HepG2 (cell line): ENCODE measurements at regions of chr4 and their contacts with region 1.

Region 1: DNA sequence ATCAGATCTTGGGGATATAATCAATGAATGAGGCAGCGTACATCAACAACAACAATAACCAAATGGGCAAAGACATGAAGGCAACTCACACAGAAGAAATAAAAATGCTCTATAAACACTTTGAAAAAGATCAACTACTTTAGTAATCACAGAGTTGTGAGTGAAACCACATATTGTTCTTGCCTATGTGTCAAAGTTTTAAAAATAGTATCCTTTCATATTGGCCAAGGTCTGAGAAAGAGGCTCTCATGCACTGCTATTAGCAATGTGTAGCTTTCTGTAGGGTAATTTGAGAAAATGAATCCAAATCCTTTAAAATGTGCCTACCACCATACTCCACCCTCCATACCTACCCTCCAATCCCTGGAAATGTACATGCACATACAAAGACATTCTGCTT is 25.0 kb downstream of the COQ2 start:
- DNase-seq: no peak
- ATAC-seq: no peak
- H3K4me3 ChIP-seq: no peak overlapping the region
- H3K27ac ChIP-seq: no peak overlapping the region
- H3K4me1 ChIP-seq: 0 out of 2 replicates have a peak, but pooled peaks cover 4% of the 10 kb centered on the region
- H3K27me3 ChIP-seq: no peaks in the 10 kb centered on the region
- CTCF ChIP-seq: no peak
- EP300 ChIP-seq: no peak
- POLR2A ChIP-seq: no peak
- RAD21 ChIP-seq: no peak

Region 2: DNA sequence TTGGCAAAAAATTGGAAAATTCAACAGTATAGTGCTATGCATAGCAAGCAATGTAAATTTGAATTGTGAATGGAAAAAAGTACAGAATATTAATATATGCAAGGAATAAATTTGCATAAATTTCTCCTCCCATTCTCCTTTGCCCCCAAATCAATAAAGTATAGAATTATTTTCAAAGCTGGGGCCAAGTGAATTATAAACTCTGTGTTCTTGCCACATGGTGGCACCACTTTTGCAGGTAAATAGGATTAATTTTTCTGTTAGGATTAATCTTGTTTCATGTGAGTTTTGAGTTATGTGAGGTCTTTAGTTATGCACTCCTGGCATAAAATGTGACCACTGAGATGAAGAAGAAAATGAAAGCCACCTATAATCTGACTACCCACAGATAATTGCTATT is 204.7 kb before region 1 on chr4:
- CTCF ChIA-PET with region 1: interaction called, 3 read pairs
- POLR2A ChIA-PET with region 1: no interaction called
- in situ Hi-C with region 1: no loop called
- intact Hi-C with region 1: loop called (anchors 5 kb)
- DNase-seq: no peak
- ATAC-seq: no peak
- H3K4me3 ChIP-seq: no peak overlapping the region
- H3K27ac ChIP-seq: no peak overlapping the region
- H3K4me1 ChIP-seq: no peaks in the 10 kb centered on the region
- H3K27me3 ChIP-seq: no peaks in the 10 kb centered on the region; a peak in 1 of 5 replicates
- CTCF ChIP-seq: no peak
- EP300 ChIP-seq: no peak
- POLR2A ChIP-seq: no peak
- RAD21 ChIP-seq: no peak

Region 3: GRCh38 chr4:83074086-83074704 is 185.4 kb before region 1 on chr4:
- CTCF ChIA-PET with region 1: interaction called, 21 read pairs
- POLR2A ChIA-PET with region 1: no interaction called
- in situ Hi-C with region 1: loop called (anchors 10 kb)
- intact Hi-C with region 1: loop called (anchors 1 kb)
- DNase-seq: peak; percentile 75
- ATAC-seq: peak; percentile 78
- H3K4me3 ChIP-seq: no peak overlapping the region
- H3K27ac ChIP-seq: no peak overlapping the region
- H3K4me1 ChIP-seq: no peaks in the 10 kb centered on the region
- H3K27me3 ChIP-seq: no peaks in the 10 kb centered on the region
- CTCF ChIP-seq: peak; percentile 70
- EP300 ChIP-seq: no peak
- POLR2A ChIP-seq: no peak
- RAD21 ChIP-seq: peak; percentile 59; the same call in 1 of the 2 replicates

Region 4: DNA sequence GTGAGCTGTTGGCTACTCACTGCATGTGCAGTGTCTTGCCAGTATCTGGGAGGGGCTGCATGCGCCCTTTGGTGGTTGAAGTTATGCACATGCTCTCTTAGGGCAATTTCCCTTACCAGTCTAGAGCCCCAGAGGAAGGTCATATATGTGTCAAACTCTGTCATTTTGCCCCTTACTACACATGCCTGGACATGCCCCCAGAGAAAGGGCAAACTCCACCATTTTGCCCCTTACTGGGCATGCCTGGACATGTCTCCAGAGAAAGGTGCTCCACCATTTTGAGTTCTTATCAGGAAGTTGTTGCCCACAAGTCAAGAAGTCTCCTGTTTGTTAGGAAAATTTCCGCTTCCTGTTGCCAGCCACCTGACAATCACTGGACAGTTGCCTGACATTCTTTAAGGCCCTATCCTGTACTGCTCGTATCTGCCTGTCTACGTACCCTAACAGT is 88.6 kb before region 1 on chr4:
- CTCF ChIA-PET with region 1: no interaction called
- POLR2A ChIA-PET with region 1: no interaction called
- in situ Hi-C with region 1: no loop called
- intact Hi-C with region 1: no loop called
- DNase-seq: no peak
- ATAC-seq: no peak
- H3K4me3 ChIP-seq: no peak overlapping the region
- H3K27ac ChIP-seq: peak overlapping the region; percentile 60
- H3K4me1 ChIP-seq: peaks cover 22% of the 10 kb centered on the region
- H3K27me3 ChIP-seq: no peaks in the 10 kb centered on the region
- CTCF ChIP-seq: no peak
- EP300 ChIP-seq: no peak
- POLR2A ChIP-seq: no peak
- RAD21 ChIP-seq: no peak